ENCODE measurements at regions of chr15 and their contacts with region 1.

Region 1: DNA sequence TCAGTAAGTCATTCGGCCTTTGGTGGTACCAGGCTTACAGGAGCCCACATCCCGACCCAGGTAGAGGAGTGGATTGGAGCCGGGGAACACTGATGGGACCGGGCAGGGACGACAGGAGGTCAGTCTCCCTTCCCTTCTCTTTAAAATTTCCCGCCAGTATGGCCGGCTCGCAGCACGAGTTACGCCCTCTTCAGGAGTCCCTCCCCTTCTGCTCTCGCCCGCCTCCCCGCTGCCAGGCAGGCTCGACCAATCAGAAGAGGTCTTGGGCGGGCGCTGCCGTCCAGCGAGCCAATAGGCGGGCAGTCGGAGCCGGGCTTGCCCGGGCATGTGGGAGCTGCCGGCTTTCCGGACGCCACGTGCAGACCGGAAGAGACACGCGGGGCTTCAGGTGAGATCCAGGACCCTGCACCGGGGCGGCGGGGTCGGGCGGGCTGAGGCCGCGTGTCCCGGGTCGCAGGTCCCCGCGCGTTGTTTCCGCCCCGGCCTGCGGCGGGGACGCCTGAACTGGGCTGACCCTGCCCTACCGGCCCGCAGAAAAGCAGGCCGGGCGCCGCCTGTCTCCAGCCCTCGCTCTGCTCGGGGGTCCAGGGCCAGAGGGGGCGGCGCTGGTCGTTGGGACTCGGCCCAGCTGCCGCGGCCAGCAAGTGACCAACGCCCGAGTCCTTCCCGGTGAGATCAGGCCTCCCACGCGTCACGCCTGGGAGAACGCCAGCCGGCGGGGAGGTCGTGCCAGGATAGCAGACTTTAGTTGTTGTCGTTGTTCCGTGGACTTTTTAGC is at the start of gene AEN:
- DNase-seq: peak; percentile 97
- CTCF ChIP-seq: no peak

Region 2: DNA sequence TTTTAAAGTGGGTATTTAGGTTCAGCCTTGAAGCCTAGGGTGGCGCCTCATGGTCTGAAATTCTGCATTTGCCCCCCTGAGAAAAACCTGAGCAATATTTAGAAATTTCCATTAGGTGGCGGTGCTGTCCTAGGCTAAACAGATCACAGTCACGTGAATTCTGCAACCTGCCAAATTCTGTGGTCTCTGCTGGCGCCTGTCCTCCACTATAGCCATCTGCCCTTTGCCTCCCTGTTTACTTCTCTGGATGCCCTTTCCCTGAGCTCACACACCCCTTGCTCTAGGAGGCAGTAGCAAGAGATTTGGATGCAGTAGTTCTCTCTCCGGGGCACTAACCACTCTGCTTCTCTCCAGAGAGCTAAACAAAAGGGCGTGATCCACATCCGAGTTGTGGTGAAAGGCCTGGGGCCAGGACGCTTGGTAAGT is 144.5 kb before region 1 on chr15:
- in situ Hi-C with region 1: loop called (anchors 10 kb)
- DNase-seq: peak; percentile 58
- CTCF ChIP-seq: peak; percentile 20

Measured in GM13976 (cell line).